Cardiac septum (tissue), 1 donor: ENCODE measurements at regions of chr17 and their contacts with region 1.

Region 1: DNA sequence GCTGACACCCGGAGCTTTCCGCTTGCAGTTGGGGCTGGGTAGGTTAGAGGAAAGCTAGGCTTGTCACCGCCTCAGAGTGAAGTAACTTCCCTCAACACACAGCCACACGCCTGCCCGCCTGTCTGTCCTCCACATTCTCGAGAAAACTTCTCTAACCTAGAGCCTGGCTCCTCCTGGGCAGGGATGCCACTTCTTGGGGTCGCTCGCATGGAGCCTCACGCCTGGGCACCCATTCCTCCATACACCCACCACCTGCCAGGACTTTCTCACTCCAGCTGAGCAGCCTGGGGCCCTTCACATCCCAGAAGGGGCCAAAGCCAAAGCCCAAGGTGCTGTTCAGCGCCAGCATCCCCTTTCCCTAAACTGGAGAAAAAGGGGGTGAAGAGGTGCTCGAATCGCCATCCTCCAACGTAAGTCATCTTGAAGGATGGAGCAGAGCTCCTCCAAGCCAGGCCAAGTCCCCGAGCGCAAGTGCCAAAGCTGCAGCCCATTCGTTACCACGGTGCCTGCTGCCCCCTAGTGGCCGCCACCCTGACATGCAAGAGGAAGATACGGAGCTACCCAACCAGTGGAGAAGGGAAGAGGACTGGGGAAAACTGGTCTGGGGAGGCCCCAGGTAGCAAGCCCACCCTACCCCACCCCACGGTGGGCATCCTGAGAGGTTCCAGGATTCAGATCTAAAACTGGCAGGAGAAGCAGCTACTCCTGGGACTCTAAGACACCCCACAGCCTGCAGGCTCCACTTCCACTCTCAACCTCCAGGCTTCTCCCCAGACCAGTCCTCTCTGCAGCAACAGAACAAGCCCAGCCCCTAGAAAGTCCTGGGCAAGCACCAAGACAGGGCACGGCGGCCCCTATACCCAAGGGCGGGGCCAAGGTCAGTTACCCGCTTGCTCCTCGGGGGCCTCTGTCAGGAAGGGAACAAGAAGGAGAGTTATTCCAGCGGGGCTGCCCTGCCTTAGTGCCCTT is 63.1 kb downstream of the MYO18A start:
- DNase-seq: peak; percentile 92

Region 2: DNA sequence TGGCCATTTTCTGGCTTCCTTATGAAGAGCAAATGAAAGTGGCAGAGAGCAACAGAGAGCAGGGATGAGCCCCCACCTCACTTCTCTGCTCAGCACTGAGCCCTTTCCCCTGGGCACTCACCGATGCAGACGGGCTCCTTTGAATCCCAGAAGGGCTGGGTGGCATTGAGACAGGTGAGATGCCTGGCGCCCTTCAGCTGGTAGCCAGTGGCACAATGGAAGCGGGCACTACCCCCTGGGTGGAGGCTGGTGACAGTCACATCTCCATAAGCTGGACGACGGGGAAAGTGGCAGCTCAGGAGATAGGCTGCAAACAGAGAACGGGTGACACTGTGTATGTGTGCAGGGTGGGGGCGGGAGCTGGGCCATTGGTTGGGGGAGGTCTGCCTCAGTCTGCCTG is 153.2 kb before region 1 on chr17:
- intact Hi-C with region 1: loop called (anchors 2 kb)
- DNase-seq: no peak

Region 3: DNA sequence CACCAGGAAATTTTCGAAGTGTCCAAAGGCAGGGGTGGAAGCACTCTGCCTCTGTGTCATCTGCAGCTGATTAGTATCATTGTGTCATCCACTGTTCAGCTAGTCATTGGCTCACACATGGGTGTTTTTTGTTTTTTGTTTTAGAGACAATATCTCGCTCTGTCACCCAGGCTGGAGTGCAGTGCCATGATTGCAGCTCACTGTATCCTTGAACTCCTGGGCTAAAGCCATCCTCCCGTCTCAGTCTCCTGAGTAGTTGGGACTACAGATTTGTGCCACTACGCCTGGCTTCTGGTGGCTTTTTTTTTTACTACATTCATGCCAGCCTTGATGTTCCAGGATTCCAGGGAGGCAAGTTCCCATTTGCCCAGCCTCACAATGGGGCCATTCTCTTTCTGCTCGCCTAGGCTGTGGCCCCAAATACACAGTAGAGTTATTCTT is 95.6 kb after region 1 on chr17:
- intact Hi-C with region 1: no loop called
- DNase-seq: no peak